Transverse colon (tissue), 4 donors: ENCODE measurements at regions of chr11 and their contacts with region 1.

Region 1: GRCh38 chr11:75867775-75868374 is 52.9 kb downstream of the UVRAG start:
- DNase-seq: no peak
- H3K4me3 ChIP-seq: no peak overlapping the region
- H3K27ac ChIP-seq: no peak overlapping the region
- H3K4me1 ChIP-seq: peaks cover 0 to 10% (median 4%) of the 10 kb centered on the region in 4 donors
- H3K27me3 ChIP-seq: no peaks in the 10 kb centered on the region
- CTCF ChIP-seq: peak; percentile 81 to 87 (median 85)
- EP300 ChIP-seq: no peak
- POLR2A ChIP-seq: no peak

Region 2: GRCh38 chr11:75428281-75428724 is 439.6 kb before region 1 on chr11:
- in situ Hi-C with region 1: no loop called
- intact Hi-C with region 1: loop called (anchors 10 kb)
- DNase-seq: peak; percentile 84
- H3K4me3 ChIP-seq: peak overlapping the region in 2 of 4 donors; percentile 14 to 38
- H3K27ac ChIP-seq: peak overlapping the region in 1 of 4 donors; percentile 37
- H3K4me1 ChIP-seq: peaks cover 6 to 24% (median 11%) of the 10 kb centered on the region in 4 donors
- H3K27me3 ChIP-seq: peaks cover 40% of the 10 kb centered on the region
- CTCF ChIP-seq: no peak
- EP300 ChIP-seq: no peak
- POLR2A ChIP-seq: peak; percentile 56

Region 3: DNA sequence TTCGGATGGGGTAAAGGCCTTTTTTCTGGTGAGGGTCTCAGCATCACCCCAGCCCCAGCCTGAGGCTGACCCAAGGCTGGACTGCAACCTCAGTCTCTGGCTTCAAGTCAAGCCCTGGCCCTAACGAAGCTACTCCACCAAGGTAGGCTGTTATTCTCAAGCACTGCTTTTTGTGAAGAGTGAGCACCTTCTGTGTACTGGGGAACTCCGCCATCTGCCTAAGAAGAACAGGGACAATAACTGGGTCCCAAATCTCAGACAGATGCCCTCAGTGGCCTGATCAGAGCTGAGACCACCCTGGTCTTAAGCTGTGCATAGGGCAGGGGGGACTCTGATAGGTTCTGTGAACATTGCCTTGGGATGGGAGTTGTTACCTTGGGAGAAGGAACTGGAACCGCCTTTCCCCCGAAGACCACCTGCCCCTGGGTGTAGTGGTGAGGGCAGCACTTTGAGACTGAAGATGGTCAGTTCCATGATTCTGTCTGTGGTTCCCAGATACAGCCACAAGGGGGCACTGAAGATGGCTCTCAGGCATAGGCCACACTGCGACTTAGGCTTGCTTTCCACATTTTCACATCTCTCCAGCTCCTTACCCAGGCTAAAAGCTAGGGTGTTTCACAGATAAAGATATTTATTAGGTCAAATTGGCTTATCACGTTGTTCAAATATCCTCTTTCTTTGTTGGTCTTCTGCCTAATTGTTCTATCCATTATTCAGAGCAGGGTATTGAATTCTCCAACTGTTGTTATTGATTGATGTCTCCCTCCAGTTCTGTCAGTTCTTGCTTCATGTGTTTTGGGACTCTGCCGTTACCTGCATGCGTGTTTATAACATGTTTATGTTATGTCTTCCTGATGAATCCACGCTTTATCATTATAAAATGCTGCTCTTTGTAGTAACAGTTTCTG is 64.7 kb before region 1 on chr11:
- in situ Hi-C with region 1: loop called in 3 of 4 experiments (anchors 5 to 10 kb)
- intact Hi-C with region 1: loop called (anchors 5 kb)
- DNase-seq: peak; percentile 83
- H3K4me3 ChIP-seq: no peak overlapping the region
- H3K27ac ChIP-seq: no peak overlapping the region
- H3K4me1 ChIP-seq: no peaks in the 10 kb centered on the region
- H3K27me3 ChIP-seq: no peaks in the 10 kb centered on the region
- CTCF ChIP-seq: peak; percentile 89 to 92 (median 90)
- EP300 ChIP-seq: no peak
- POLR2A ChIP-seq: no peak

Region 4: DNA sequence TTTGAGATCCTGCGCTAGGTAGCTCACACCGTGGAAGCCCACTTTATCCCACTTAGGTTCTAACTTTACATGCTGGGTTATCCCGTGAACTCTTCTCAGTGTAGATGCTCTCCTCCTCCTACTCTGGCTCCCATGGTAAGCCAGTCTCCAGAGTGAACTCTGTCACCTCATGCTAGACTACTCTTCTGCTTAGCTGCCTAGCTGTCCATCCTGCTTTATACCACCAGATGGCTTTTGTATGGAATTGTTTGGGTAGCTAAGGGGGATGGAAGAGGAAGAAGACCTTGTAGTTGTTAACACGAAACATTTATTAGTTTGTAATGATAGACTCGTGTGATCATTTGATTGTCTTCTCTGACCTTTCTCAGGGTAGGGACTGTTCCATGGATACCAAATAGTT is 623.8 kb after region 1 on chr11:
- in situ Hi-C with region 1: no loop called
- intact Hi-C with region 1: no loop called
- DNase-seq: no peak
- H3K4me3 ChIP-seq: no peak overlapping the region
- H3K27ac ChIP-seq: no peak overlapping the region
- H3K4me1 ChIP-seq: peaks cover 0 to 22% (median 9%) of the 10 kb centered on the region in 4 donors
- H3K27me3 ChIP-seq: no peaks in the 10 kb centered on the region
- CTCF ChIP-seq: no peak
- EP300 ChIP-seq: no peak
- POLR2A ChIP-seq: no peak